HEK293 (cell line): ENCODE measurements at regions of chr15 and their contacts with region 1.

Region 1: DNA sequence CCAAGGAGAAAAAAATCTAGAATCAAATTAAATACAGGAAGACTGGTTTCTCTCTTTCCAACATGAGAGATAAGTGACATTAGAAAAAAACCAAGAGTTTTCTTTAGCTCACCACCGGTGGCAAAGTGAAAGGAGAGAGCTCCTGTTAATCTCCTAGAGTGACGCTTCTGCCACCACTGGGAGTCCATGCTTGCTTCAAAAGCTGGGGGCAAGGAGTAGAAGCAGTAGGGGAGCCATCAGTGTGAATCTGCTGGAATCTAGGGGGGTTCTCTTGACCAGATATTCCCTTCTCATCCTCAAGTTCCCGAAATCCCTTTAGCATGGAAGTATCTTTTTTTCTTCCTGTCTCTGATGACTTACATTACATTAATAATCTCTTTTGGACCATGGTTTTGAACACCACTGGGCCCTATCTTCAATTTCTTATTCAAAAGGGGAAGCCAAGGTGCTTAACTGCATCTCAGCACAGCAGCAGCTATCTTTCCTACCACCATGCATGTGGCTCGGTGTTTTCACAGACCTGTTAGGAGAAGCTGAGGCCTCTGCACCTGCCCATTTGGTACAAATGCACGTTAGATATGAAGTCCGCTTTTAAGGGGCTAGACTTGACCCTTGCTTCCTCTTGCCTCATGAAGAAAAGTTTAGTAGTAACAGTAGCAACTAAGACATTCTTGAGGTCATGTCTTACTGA is 6.6 kb upstream of the ICE2 start:
- H3K4me3 ChIP-seq: no peak overlapping the region
- H3K27ac ChIP-seq: no peak overlapping the region
- H3K4me1 ChIP-seq: no peaks in the 10 kb centered on the region
- CTCF ChIP-seq: no peak

Region 2: GRCh38 chr15:60374628-60375081 is 110.9 kb before region 1 on chr15:
- CTCF ChIA-PET with region 1: no interaction called
- POLR2A ChIA-PET with region 1: no interaction called
- H3K4me3 ChIP-seq: no peak overlapping the region
- H3K27ac ChIP-seq: peak overlapping the region; percentile 32
- H3K4me1 ChIP-seq: peaks cover 13% of the 10 kb centered on the region
- CTCF ChIP-seq: no peak

Region 3: GRCh38 chr15:60469893-60470641 is 15.4 kb before region 1 on chr15:
- CTCF ChIA-PET with region 1: no interaction called
- POLR2A ChIA-PET with region 1: no interaction called
- H3K4me3 ChIP-seq: no peak overlapping the region
- H3K27ac ChIP-seq: no peak overlapping the region
- H3K4me1 ChIP-seq: no peaks in the 10 kb centered on the region
- CTCF ChIP-seq: no peak

Region 4: GRCh38 chr15:61069394-61070075 is 584.0 kb after region 1 on chr15:
- CTCF ChIA-PET with region 1: no interaction called
- POLR2A ChIA-PET with region 1: interaction called, 12 read pairs
- H3K4me3 ChIP-seq: no peak overlapping the region
- H3K27ac ChIP-seq: no peak overlapping the region
- H3K4me1 ChIP-seq: peaks cover 14% of the 10 kb centered on the region
- CTCF ChIP-seq: no peak